ENCODE measurements at regions of chr1 and their contacts with region 1.

Region 1: GRCh38 chr1:77143529-77144121 is 75.6 kb downstream of the PIGK start:
- DNase-seq: no peak
- ATAC-seq: 0 out of 3 replicates have a peak, but pooled peaks have one; percentile 34
- H3K4me3 ChIP-seq: no peak overlapping the region
- H3K27ac ChIP-seq: no peak overlapping the region
- H3K4me1 ChIP-seq: no peaks in the 10 kb centered on the region
- H3K27me3 ChIP-seq: no peaks in the 10 kb centered on the region
- CTCF ChIP-seq: peak in 1 of 3 experiments; percentile 17; a peak in 2 of 6 replicates
- EP300 ChIP-seq: no peak
- POLR2A ChIP-seq: no peak
- RAD21 ChIP-seq: peak; percentile 34; the same call in 1 of the 2 replicates

Region 2: DNA sequence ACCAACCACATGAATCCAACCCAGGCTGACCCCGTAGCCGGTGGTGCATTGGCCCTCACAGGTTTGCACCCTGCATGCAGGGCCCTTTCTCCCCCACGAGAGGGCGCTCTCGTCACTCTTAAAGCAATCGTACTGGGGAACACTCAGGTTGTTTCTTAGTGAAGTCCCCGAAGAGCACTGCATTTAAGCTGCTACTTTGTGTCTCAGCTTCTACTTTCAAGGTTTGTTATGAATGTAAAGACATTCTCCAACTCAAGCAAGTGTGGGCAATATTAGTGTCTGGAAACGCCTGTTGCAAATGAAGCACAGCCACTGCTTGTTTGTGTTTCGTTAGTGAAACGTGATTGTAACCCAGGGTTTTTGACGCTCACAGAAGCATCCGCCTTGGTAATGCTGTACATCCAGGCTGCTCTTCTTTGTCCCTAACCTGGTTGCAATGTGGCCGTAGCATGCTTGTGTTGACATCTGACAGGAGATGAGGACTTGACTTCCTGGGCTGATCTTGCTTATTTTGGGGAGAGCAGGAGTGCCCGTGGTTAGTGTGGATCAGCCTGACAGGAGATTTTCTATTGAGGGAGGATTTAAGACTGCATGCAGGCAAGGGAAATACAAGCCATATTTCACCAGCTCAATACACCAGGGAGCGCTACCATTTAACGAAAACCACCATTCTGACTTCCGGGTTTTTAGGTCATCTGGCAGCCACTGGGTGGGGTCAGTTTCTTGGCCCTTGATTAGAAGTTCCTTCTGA is 989.2 kb before region 1 on chr1:
- CTCF ChIA-PET with region 1: interaction called, 59 read pairs
- POLR2A ChIA-PET with region 1: no interaction called
- RAD21 ChIA-PET with region 1: interaction called, 10 read pairs
- SMC1A ChIA-PET with region 1: interaction called, 8 read pairs
- in situ Hi-C with region 1: loop called (anchors 5 kb)
- intact Hi-C with region 1: loop called (anchors 1 kb)
- DNase-seq: peak; percentile 32
- ATAC-seq: peak; percentile 98
- H3K4me3 ChIP-seq: peak overlapping the region; percentile 48; the same call in 1 of the 2 replicates
- H3K27ac ChIP-seq: no peak overlapping the region
- H3K4me1 ChIP-seq: no peaks in the 10 kb centered on the region
- H3K27me3 ChIP-seq: no peaks in the 10 kb centered on the region; a peak in 1 of 4 replicates
- CTCF ChIP-seq: peak; percentile 97 to 99 (median 97)
- EP300 ChIP-seq: no peak
- POLR2A ChIP-seq: no peak
- RAD21 ChIP-seq: peak; percentile 89

Region 3: DNA sequence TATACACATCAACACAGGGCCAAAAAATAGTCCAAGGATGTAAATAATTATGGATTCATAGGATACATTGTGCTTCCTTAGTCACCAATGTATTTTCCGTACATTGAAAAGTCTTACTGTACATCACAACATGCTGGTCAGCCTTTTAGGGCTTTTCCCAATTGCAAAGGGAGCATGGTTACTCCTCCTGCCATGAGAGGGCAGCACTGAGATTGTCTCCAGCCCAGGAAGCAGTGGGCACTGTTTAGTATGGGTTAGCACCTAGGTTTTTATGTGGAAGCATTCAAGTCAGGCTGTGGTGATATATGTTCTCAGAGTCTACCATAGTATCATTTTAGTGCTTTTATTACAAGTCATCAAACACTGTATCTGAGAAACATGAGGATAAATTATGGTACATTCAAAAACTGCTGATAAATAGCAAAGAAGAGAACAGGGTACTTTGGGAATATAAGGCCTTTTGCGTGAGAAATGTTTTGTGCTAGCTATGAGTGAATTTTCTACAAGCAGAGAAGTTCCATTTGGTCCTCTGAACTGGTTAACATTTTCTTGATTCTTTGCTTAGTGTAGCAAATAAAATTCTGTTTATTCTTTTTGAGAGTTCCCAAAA is 242.4 kb before region 1 on chr1:
- CTCF ChIA-PET with region 1: no interaction called
- POLR2A ChIA-PET with region 1: no interaction called
- RAD21 ChIA-PET with region 1: no interaction called
- SMC1A ChIA-PET with region 1: no interaction called
- in situ Hi-C with region 1: no loop called
- intact Hi-C with region 1: loop called (anchors 5 kb)
- DNase-seq: peak; percentile 9
- ATAC-seq: peak; percentile 99
- H3K4me3 ChIP-seq: no peak overlapping the region
- H3K27ac ChIP-seq: no peak overlapping the region
- H3K4me1 ChIP-seq: no peaks in the 10 kb centered on the region
- H3K27me3 ChIP-seq: no peaks in the 10 kb centered on the region
- CTCF ChIP-seq: peak; percentile 72 to 80 (median 78)
- EP300 ChIP-seq: no peak
- POLR2A ChIP-seq: no peak
- RAD21 ChIP-seq: peak; percentile 71

Region 4: GRCh38 chr1:77370583-77371306 is 227.1 kb after region 1 on chr1:
- CTCF ChIA-PET with region 1: no interaction called
- POLR2A ChIA-PET with region 1: no interaction called
- RAD21 ChIA-PET with region 1: no interaction called
- SMC1A ChIA-PET with region 1: no interaction called
- in situ Hi-C with region 1: no loop called
- intact Hi-C with region 1: no loop called
- DNase-seq: no peak
- ATAC-seq: no peak
- H3K4me3 ChIP-seq: no peak overlapping the region
- H3K27ac ChIP-seq: no peak overlapping the region
- H3K4me1 ChIP-seq: no peaks in the 10 kb centered on the region
- H3K27me3 ChIP-seq: no peaks in the 10 kb centered on the region
- CTCF ChIP-seq: no peak
- EP300 ChIP-seq: no peak
- POLR2A ChIP-seq: no peak
- RAD21 ChIP-seq: no peak

Region 5: GRCh38 chr1:77533660-77534305 is 390.2 kb after region 1 on chr1:
- CTCF ChIA-PET with region 1: interaction called, 5 read pairs
- POLR2A ChIA-PET with region 1: no interaction called
- RAD21 ChIA-PET with region 1: no interaction called
- SMC1A ChIA-PET with region 1: interaction called, 3 read pairs
- in situ Hi-C with region 1: no loop called
- intact Hi-C with region 1: loop called (anchors 1 kb)
- DNase-seq: no peak
- ATAC-seq: peak; percentile 82
- H3K4me3 ChIP-seq: no peak overlapping the region
- H3K27ac ChIP-seq: no peak overlapping the region
- H3K4me1 ChIP-seq: peaks cover 3% of the 10 kb centered on the region; the same call in 1 of the 2 replicates
- H3K27me3 ChIP-seq: no peaks in the 10 kb centered on the region
- CTCF ChIP-seq: peak; percentile 78 to 84 (median 80)
- EP300 ChIP-seq: no peak
- POLR2A ChIP-seq: no peak
- RAD21 ChIP-seq: peak; percentile 69

Region 6: GRCh38 chr1:77900687-77901293 is 757.2 kb after region 1 on chr1:
- CTCF ChIA-PET with region 1: no interaction called
- POLR2A ChIA-PET with region 1: no interaction called
- RAD21 ChIA-PET with region 1: no interaction called
- SMC1A ChIA-PET with region 1: no interaction called
- in situ Hi-C with region 1: loop called (anchors 10 kb)
- intact Hi-C with region 1: loop called (anchors 10 kb)
- DNase-seq: peak; percentile 11
- ATAC-seq: peak; percentile 82
- H3K4me3 ChIP-seq: no peak overlapping the region
- H3K27ac ChIP-seq: no peak overlapping the region
- H3K4me1 ChIP-seq: no peaks in the 10 kb centered on the region
- H3K27me3 ChIP-seq: no peaks in the 10 kb centered on the region
- CTCF ChIP-seq: peak; percentile 61 to 72 (median 71); a peak in 5 of 6 replicates
- EP300 ChIP-seq: no peak
- POLR2A ChIP-seq: no peak
- RAD21 ChIP-seq: peak; percentile 84